Panc1 (cell line): ENCODE measurements at regions of chr5 and their contacts with region 1.

Region 1: GRCh38 chr5:109605207-109605730 is 84.5 kb upstream of the MAN2A1 start:
- DNase-seq: no peak
- ATAC-seq: no peak
- H3K4me3 ChIP-seq: no peak overlapping the region
- H3K27ac ChIP-seq: no peak overlapping the region
- H3K4me1 ChIP-seq: no peaks in the 10 kb centered on the region
- H3K27me3 ChIP-seq: peaks cover 2% of the 10 kb centered on the region; the same call in 1 of the 2 replicates
- CTCF ChIP-seq: no peak

Region 2: GRCh38 chr5:109589986-109590385 is 15.3 kb before region 1 on chr5:
- CTCF ChIA-PET with region 1: no interaction called
- POLR2A ChIA-PET with region 1: interaction called, 14 read pairs
- in situ Hi-C with region 1: no loop called
- intact Hi-C with region 1: no loop called
- DNase-seq: no peak
- ATAC-seq: no peak
- H3K4me3 ChIP-seq: no peak overlapping the region
- H3K27ac ChIP-seq: no peak overlapping the region
- H3K4me1 ChIP-seq: no peaks in the 10 kb centered on the region
- H3K27me3 ChIP-seq: no peaks in the 10 kb centered on the region
- CTCF ChIP-seq: no peak